Endothelial cell of umbilical vein (primary cell): ENCODE measurements at regions of chr15 and their contacts with region 1.

Region 1: DNA sequence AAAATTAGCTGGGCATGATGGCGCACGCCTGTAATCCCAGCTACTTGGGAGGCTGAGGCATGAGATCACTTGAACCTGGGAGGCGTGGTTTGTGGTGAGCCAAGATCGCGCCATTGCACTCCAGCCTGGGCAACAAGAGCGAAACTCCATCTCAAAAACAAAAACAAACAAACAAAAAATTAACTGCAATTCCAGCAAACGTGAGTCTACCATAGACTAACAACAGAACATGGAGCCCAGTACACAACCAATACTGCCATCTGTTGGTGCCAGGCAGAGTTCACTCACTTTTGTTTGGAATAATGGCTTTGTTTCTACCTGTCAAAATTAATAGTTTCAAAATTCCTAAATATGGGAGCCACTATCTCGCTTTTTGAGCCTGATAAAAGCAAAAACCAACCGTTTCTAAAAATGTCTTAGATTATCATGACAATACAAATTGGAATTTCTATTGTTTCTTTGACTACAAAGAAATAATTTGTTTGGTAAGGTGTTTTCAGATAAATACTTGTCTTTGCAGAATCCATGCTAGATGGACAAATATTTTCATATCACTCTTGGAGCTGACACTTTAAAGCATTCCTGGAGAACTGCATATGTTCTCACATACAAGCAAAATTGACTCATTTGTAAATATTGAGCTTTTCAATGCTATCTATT is 45.0 kb downstream of the GPR176 start:
- DNase-seq: peak; percentile 67
- H3K4me3 ChIP-seq: no peak overlapping the region
- H3K27ac ChIP-seq: no peak overlapping the region
- H3K4me1 ChIP-seq: no peaks in the 10 kb centered on the region
- H3K27me3 ChIP-seq: no peaks in the 10 kb centered on the region
- CTCF ChIP-seq: peak; percentile 53 to 70
- POLR2A ChIP-seq: no peak

Region 2: DNA sequence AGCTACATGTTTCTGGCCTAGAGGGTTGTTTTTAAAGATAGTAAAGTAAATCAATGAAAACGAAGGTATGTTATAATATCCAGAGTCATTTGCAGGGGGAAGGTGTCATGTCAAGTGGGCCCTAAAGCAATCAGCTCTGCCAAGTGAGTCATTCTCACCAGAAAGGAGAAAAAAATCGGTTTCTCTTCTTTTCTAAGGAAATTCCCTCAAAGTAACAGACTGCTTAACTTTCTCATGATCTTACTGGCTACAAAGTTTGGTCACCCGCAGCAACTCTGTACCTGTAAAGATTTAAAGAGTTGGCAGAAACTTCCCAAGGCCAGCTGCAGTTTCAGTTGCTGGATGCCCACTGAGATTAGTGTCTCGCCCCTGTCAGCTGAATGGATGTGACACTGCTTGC is 86.9 kb before region 1 on chr15:
- CTCF ChIA-PET with region 1: interaction called, 49 read pairs
- POLR2A ChIA-PET with region 1: no interaction called
- dilution Hi-C with region 1: no loop called
- intact Hi-C with region 1: loop called (anchors 1 kb)
- DNase-seq: peak; percentile 34
- H3K4me3 ChIP-seq: no peak overlapping the region
- H3K27ac ChIP-seq: no peak overlapping the region
- H3K4me1 ChIP-seq: peaks cover 29% of the 10 kb centered on the region
- H3K27me3 ChIP-seq: no peaks in the 10 kb centered on the region
- CTCF ChIP-seq: no peak
- POLR2A ChIP-seq: no peak

Region 3: DNA sequence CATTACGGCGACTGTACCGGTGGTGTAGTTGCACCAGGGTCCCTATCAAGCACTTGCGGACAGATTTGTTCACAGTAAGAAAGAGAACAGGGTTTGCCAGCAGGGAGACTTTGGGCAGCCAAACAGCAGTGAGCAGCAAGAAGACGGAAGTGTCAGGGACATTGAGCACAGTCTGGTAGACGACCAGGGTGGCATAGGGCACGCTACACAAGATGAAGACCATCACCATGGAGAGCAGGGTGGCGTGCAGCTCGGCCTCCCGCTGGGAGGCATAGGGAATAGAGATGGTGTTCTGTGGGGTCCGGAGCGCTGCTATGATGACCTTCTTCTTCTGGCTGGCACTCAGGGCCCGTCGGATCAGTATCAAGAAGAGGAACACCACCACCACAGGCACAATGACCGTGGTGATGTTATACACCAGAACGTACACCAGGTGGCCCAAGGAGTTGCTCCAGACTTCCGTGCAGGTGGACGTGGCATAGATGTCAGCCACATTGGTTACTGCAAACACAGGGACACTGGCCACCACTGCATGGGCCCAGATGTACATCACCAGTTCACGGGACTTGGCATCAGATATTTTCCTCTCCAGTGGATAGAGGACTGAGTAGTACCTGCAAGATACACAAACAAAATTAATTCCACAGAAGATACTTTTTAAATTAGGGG is 73.2 kb before region 1 on chr15:
- CTCF ChIA-PET with region 1: interaction called, 11 read pairs
- POLR2A ChIA-PET with region 1: no interaction called
- dilution Hi-C with region 1: no loop called
- intact Hi-C with region 1: loop called (anchors 1 kb)
- DNase-seq: peak; percentile 14
- H3K4me3 ChIP-seq: no peak overlapping the region
- H3K27ac ChIP-seq: no peak overlapping the region
- H3K4me1 ChIP-seq: no peaks in the 10 kb centered on the region
- H3K27me3 ChIP-seq: no peaks in the 10 kb centered on the region
- CTCF ChIP-seq: peak; percentile 21 to 32
- POLR2A ChIP-seq: no peak